Endothelial cell of umbilical vein (primary cell): ENCODE measurements at regions of chr11 and their contacts with region 1.

Region 1: DNA sequence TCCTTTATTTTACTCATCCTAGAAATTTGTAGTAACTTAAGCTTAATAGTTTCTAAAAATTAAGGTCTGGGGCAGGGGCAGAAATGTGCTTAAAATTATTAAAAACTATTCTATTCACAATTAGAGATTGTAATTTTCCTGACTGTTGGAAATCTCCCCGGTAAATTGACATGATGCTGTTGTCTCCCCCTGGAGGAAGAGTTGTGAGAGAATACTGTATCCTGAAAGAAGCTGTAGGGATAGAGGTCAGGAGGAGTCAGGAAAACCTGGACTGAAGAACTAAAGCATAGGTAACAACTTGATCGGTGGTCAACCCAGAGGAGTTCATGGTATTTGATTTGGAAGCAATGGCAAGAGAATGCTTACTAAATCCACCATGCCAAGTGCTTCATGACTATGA is 16.2 kb upstream of the ESAM start:
- DNase-seq: no peak
- H3K4me3 ChIP-seq: no peak overlapping the region
- H3K27ac ChIP-seq: no peak overlapping the region
- H3K4me1 ChIP-seq: no peaks in the 10 kb centered on the region
- H3K27me3 ChIP-seq: no peaks in the 10 kb centered on the region
- CTCF ChIP-seq: peak in 1 of 2 donors; percentile 26
- POLR2A ChIP-seq: no peak

Region 2: DNA sequence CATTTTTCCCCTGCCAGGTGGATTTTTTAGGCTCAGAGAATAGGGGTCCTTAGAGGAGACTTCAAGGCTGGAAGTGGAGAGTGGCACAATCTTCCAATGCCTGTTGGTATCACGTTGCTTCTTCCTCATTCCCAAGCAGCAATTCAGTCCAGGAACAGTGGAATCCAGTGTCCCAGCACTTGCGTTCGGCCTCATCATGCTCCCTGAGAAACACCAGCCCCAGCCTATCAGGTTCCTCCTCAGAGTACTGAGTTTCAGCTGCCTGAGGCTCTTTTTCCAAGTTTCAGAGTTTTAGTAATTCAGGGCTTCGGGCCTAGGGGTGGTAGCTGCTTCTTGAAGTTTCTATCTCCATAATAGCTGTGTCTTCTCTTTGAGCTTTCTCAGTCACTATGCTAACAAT is 70.5 kb before region 1 on chr11:
- CTCF ChIA-PET with region 1: no interaction called
- POLR2A ChIA-PET with region 1: no interaction called
- dilution Hi-C with region 1: no loop called
- intact Hi-C with region 1: no loop called
- DNase-seq: no peak
- H3K4me3 ChIP-seq: no peak overlapping the region
- H3K27ac ChIP-seq: no peak overlapping the region
- H3K4me1 ChIP-seq: no peaks in the 10 kb centered on the region
- H3K27me3 ChIP-seq: no peaks in the 10 kb centered on the region
- CTCF ChIP-seq: no peak
- POLR2A ChIP-seq: no peak

Region 3: DNA sequence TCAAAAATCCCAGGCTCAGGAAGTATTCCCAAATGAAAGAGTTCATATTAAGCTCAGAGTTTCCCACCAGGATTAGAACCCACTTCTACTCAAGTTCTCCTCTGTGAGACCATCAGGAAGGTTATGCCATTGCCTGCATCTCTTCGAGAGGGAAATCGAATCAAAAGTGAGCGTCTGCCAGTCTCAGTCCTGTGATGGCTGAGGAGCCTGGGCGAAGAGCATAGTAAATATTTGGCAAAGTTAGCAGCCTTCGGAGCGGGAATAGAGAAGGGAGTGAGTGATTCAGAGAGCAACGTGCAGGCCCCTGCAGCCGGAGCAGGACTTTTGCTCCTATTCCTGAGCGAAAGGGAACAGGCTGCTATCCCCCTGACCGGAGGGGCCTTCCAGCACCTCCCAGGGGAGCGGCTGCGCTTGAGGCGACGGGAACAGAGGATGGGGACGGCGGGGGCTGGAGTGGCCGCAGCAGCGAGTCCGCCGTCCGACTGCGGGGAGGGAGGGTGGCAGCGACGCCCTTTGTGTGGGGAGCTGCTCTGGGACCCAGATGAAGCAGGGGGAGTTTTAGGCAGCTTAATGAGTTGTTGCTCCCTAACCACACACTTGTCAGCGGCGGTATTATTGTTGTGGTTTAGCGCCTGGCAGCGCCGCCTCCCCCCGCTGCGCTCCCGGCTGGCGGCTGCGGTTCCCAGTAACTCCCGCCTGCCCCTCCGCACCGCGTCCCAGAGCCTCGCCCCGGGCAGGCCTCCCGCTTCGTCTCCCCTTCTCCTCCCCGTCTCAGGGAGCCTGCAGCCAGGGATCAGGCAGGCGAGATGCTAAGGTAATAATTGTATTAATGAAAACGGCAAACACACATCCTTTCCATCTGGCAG is 60.3 kb before region 1 on chr11:
- CTCF ChIA-PET with region 1: no interaction called
- POLR2A ChIA-PET with region 1: no interaction called
- dilution Hi-C with region 1: no loop called
- intact Hi-C with region 1: no loop called
- DNase-seq: peak; percentile 78
- H3K4me3 ChIP-seq: peak overlapping the region; percentile 26 to 61 (median 39)
- H3K27ac ChIP-seq: peak overlapping the region; percentile 62
- H3K4me1 ChIP-seq: peaks cover 24% of the 10 kb centered on the region
- H3K27me3 ChIP-seq: no peaks in the 10 kb centered on the region
- CTCF ChIP-seq: no peak
- POLR2A ChIP-seq: peak; percentile 11

Region 4: DNA sequence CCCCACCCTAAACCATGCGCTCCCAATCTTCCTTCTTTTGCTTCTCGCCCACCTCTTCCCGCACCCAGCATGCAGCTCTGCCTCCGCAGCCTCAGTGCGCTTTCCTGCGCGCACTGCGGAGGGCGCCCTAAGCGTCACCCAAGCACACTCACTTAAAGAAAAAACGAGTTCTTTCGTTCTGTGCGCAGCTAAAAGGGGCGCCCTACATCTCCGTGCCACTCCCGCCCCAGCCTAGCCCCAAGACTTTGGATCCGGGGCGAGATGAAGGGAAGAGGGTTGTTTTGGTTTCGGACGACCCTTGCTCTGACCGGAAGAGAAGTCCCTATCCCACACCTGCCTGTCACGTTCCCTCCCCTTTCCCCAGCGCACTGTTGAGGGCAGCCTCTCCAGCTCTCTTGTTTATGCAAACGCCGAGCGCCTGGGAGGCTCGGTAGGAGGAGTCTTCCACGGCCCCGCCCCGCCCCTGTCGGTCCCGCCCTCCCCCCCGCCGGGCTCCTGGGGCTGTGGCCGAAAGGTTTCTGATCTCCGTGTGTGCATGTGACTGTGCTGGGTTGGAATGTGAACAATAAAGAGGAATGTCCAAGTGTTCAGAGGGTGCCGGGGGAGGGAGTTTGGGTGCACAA is 31.5 kb before region 1 on chr11:
- CTCF ChIA-PET with region 1: interaction called, 12 read pairs
- POLR2A ChIA-PET with region 1: no interaction called
- dilution Hi-C with region 1: no loop called
- intact Hi-C with region 1: no loop called
- DNase-seq: peak; percentile 93
- H3K4me3 ChIP-seq: peak overlapping the region in 2 of 3 experiments; percentile 36 to 46
- H3K27ac ChIP-seq: peak overlapping the region; percentile 70
- H3K4me1 ChIP-seq: peaks cover 40% of the 10 kb centered on the region
- H3K27me3 ChIP-seq: no peaks in the 10 kb centered on the region
- CTCF ChIP-seq: peak; percentile 62 to 79
- POLR2A ChIP-seq: peak; percentile 72

Region 5: DNA sequence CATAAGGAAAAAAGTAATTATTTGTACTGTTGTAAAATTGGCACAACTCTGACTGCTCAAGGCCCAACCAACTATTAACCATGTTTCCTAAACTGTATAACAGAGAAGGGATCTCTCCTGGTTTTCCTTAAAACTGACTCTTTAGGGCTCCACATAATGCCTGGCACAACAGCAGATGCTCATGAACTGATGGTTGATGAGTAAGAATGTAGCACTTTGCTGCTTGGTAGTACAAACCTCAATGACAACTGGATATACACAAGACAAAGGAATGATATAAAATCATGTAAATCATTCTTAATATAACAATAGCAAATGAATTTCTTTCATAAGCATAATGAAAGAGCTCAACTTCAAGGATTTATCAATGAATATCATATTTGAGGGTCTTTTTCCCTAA is 10.2 kb after region 1 on chr11:
- CTCF ChIA-PET with region 1: interaction called, 54 read pairs
- POLR2A ChIA-PET with region 1: interaction called, 5 read pairs
- dilution Hi-C with region 1: no loop called
- intact Hi-C with region 1: no loop called
- DNase-seq: no peak
- H3K4me3 ChIP-seq: no peak overlapping the region
- H3K27ac ChIP-seq: no peak overlapping the region
- H3K4me1 ChIP-seq: peaks cover 3% of the 10 kb centered on the region
- H3K27me3 ChIP-seq: no peaks in the 10 kb centered on the region
- CTCF ChIP-seq: no peak
- POLR2A ChIP-seq: no peak

Region 6: GRCh38 chr11:124800226-124800929 is 22.1 kb after region 1 on chr11 and contains the start of gene MSANTD2:
- CTCF ChIA-PET with region 1: interaction called, 54 read pairs
- POLR2A ChIA-PET with region 1: no interaction called
- dilution Hi-C with region 1: no loop called
- intact Hi-C with region 1: no loop called
- DNase-seq: peak; percentile 82
- H3K4me3 ChIP-seq: peak within 1 kb of the TSS; percentile 59 to 98 (median 62)
- H3K27ac ChIP-seq: peak within 1 kb of the TSS; percentile 81
- H3K4me1 ChIP-seq: peaks cover 20% of the 10 kb centered on the region
- H3K27me3 ChIP-seq: no peaks in the 10 kb centered on the region
- CTCF ChIP-seq: no peak
- POLR2A ChIP-seq: peak; percentile 81
- total RNA-seq, gene MSANTD2: 17.0 and 23.2 TPM in 2 replicates